ENCODE measurements at regions of chr3 and their contacts with region 1.

Region 1: DNA sequence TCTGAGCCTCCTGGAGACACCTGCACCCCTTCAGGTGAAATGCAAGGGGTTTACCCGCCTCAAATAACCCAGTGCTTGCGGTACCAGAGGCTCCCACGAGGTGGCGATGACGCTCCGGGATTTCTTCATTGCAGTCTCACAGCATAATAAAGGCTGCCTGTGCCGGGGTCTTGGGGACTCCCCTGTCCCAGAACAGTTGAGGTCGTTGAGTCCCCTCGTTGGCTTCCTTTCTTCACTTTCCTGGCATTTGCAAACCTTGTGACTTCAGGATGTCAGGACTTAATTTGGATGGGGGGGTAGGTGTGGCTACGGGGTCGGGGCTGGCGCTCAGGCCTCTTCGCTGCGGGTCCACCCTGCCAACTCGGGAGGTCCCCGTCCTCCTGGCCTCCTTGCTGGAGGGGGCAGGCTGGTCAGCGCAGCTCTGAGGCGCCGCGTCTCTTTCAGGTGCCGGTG is 1.3 kb downstream of the GNAT1 start:
- H3K4me3 ChIP-seq: no peak overlapping the region
- H3K27ac ChIP-seq: no peak overlapping the region
- H3K4me1 ChIP-seq: no peaks in the 10 kb centered on the region
- CTCF ChIP-seq: peak; percentile 42

Region 2: DNA sequence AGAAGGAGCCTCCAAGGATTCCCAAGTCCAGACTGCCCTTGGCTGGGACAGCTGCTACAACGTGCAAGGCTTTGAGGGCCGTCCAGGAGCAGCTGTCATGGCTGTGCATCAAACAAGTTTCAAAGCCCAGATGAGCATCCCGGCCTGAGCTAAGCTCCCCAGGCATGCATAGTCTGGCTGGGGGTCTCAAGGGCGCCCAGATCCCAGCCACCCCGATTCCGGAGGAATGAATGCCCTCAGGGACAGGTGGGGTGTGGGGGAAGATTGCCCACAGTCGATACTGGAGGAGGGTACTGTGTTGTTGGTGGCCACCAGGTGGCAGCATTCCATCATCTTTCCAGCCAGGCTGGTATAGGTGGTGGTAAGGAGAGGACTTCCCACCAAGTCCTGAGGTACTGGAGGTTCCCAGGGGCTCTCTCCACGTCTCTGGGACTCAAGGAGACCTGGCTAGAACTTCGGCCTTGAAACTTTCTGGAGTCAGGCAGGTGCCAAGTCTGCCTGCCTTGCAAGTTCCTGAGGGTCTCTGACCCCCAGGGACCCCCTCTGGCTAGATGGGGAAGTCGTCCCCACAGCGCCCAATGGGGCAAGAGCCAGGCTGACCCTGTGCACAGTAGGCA is 71.2 kb before region 1 on chr3:
- CTCF ChIA-PET with region 1: interaction called, 51 read pairs
- POLR2A ChIA-PET with region 1: no interaction called
- H3K4me3 ChIP-seq: no peak overlapping the region
- H3K27ac ChIP-seq: no peak overlapping the region
- H3K4me1 ChIP-seq: peaks cover 7% of the 10 kb centered on the region
- CTCF ChIP-seq: peak; percentile 78

Region 3: GRCh38 chr3:50205414-50206276 is 12.9 kb after region 1 on chr3:
- CTCF ChIA-PET with region 1: interaction called, 39 read pairs
- POLR2A ChIA-PET with region 1: interaction called, 3 read pairs
- H3K4me3 ChIP-seq: peak overlapping the region; percentile 44
- H3K27ac ChIP-seq: no peak overlapping the region
- H3K4me1 ChIP-seq: no peaks in the 10 kb centered on the region
- CTCF ChIP-seq: no peak

Region 4: GRCh38 chr3:50245831-50246516 is 53.3 kb after region 1 on chr3:
- CTCF ChIA-PET with region 1: interaction called, 71 read pairs
- POLR2A ChIA-PET with region 1: no interaction called
- H3K4me3 ChIP-seq: peak overlapping the region; percentile 26
- H3K27ac ChIP-seq: peak overlapping the region; percentile 43
- H3K4me1 ChIP-seq: peaks cover 6% of the 10 kb centered on the region; the same call in 1 of the 2 replicates
- CTCF ChIP-seq: peak; percentile 87

Region 5: GRCh38 chr3:50272911-50273693 is 80.4 kb after region 1 on chr3:
- CTCF ChIA-PET with region 1: interaction called, 22 read pairs
- POLR2A ChIA-PET with region 1: no interaction called
- H3K4me3 ChIP-seq: no peak overlapping the region
- H3K27ac ChIP-seq: no peak overlapping the region
- H3K4me1 ChIP-seq: no peaks in the 10 kb centered on the region
- CTCF ChIP-seq: peak; percentile 94